Adrenal gland (tissue), 19 donors: ENCODE measurements at regions of chr2 and their contacts with region 1.

Region 1: GRCh38 chr2:212580117-212580516 is 41.5 kb upstream of the ERBB4 start:
- DNase-seq: no peak
- H3K4me3 ChIP-seq: no peak overlapping the region
- H3K27ac ChIP-seq: no peak overlapping the region
- H3K4me1 ChIP-seq: no peaks in the 10 kb centered on the region
- H3K27me3 ChIP-seq: no peaks in the 10 kb centered on the region
- CTCF ChIP-seq: no peak
- POLR2A ChIP-seq: no peak

Region 2: GRCh38 chr2:211455216-211455841 is 1124.8 kb before region 1 on chr2:
- intact Hi-C with region 1: loop called in 1 of 2 experiments (anchors 10 kb)
- DNase-seq: peak in 6 of 7 donors; percentile 13 to 68 (median 43)
- H3K4me3 ChIP-seq: no peak overlapping the region
- H3K27ac ChIP-seq: no peak overlapping the region
- H3K4me1 ChIP-seq: no peaks in the 10 kb centered on the region
- H3K27me3 ChIP-seq: no peaks in the 10 kb centered on the region
- CTCF ChIP-seq: peak; percentile 48 to 93 (median 68)
- POLR2A ChIP-seq: no peak

Region 3: GRCh38 chr2:212638694-212639093 is 58.6 kb after region 1 on chr2:
- intact Hi-C with region 1: no loop called
- DNase-seq: no peak
- H3K4me3 ChIP-seq: no peak overlapping the region
- H3K27ac ChIP-seq: no peak overlapping the region
- H3K4me1 ChIP-seq: no peaks in the 10 kb centered on the region
- H3K27me3 ChIP-seq: no peaks in the 10 kb centered on the region
- CTCF ChIP-seq: no peak
- POLR2A ChIP-seq: no peak

Region 4: DNA sequence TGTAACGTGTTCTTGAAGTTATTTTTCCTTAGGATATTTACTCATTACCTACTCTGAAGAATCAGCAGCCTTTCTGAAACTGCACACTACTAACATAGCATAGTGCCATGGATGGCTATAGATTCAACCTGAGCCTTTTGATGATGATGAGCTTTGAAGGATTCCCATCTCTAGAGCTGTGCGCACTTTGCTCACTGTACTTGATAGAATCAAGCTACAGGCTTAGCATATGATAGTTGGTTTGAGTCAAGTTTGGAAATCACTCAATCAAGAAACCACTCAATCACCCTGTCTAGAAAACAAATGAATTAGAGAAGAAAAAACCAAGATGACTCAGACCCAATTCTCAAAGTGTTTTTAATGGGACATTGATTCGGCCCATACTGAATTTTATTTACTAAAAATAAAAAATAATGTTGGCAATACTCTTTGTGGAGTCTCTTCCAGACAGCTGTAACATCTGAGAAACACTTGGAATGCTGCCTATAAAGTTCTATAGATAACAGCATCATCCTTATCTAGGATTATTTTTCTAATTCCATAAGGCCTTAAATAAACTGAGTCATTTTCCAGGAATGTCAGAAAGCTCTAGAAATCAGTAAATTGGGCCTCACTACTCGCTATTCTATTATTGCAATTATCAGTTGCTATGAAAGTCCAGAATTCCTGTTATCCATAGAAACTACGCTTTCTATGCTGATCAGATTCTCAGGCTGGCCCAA is 217.5 kb after region 1 on chr2:
- intact Hi-C with region 1: no loop called
- DNase-seq: no peak
- H3K4me3 ChIP-seq: no peak overlapping the region
- H3K27ac ChIP-seq: no peak overlapping the region
- H3K4me1 ChIP-seq: no peaks in the 10 kb centered on the region
- H3K27me3 ChIP-seq: no peaks in the 10 kb centered on the region
- CTCF ChIP-seq: no peak
- POLR2A ChIP-seq: no peak